ENCODE measurements at regions of chr13 and their contacts with region 1.

Region 1: GRCh38 chr13:83350569-83350968 is 531.7 kb downstream of the SLITRK1 start:
- DNase-seq: no peak
- ATAC-seq: no peak
- H3K4me3 ChIP-seq: no peak overlapping the region
- H3K27ac ChIP-seq: no peak overlapping the region
- H3K4me1 ChIP-seq: no peaks in the 10 kb centered on the region
- H3K27me3 ChIP-seq: no peaks in the 10 kb centered on the region
- CTCF ChIP-seq: no peak
- EP300 ChIP-seq: no peak
- POLR2A ChIP-seq: no peak
- RAD21 ChIP-seq: no peak

Region 2: DNA sequence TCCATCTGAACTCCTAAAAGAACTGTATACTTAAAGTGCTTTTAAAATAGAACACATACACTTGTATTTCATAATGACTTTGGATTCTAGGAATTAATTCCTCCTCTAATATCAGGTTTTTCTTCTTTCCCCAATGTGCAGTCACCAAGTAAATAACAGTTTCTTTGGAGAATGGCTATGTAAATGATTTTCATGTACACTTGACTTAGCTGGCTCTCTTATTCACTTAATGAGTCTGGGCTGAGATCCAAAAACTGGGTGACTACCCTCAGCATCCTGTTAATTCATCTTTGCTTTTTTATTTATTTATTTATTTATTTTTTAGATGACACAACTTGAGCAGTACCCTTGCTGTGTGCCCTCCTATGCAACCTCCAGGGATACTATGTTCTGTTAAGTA is 472.0 kb before region 1 on chr13:
- CTCF ChIA-PET with region 1: no interaction called
- POLR2A ChIA-PET with region 1: no interaction called
- RAD21 ChIA-PET with region 1: no interaction called
- SMC1A ChIA-PET with region 1: no interaction called
- in situ Hi-C with region 1: no loop called
- intact Hi-C with region 1: no loop called
- DNase-seq: no peak
- ATAC-seq: no peak
- H3K4me3 ChIP-seq: no peak overlapping the region
- H3K27ac ChIP-seq: no peak overlapping the region
- H3K4me1 ChIP-seq: no peaks in the 10 kb centered on the region
- H3K27me3 ChIP-seq: no peaks in the 10 kb centered on the region; a peak in 1 of 4 replicates
- CTCF ChIP-seq: no peak
- EP300 ChIP-seq: no peak
- POLR2A ChIP-seq: no peak
- RAD21 ChIP-seq: no peak

Region 3: GRCh38 chr13:83325125-83325853 is 25.3 kb before region 1 on chr13:
- CTCF ChIA-PET with region 1: no interaction called
- POLR2A ChIA-PET with region 1: no interaction called
- RAD21 ChIA-PET with region 1: no interaction called
- SMC1A ChIA-PET with region 1: no interaction called
- in situ Hi-C with region 1: no loop called
- intact Hi-C with region 1: loop called (anchors 2 kb)
- DNase-seq: no peak
- ATAC-seq: no peak
- H3K4me3 ChIP-seq: no peak overlapping the region
- H3K27ac ChIP-seq: no peak overlapping the region
- H3K4me1 ChIP-seq: no peaks in the 10 kb centered on the region
- H3K27me3 ChIP-seq: no peaks in the 10 kb centered on the region
- CTCF ChIP-seq: no peak
- EP300 ChIP-seq: no peak
- POLR2A ChIP-seq: no peak
- RAD21 ChIP-seq: no peak

Measured in GM12878 (cell line).